H1 (cell line): ENCODE measurements at regions of chr13 and their contacts with region 1.

Region 1: DNA sequence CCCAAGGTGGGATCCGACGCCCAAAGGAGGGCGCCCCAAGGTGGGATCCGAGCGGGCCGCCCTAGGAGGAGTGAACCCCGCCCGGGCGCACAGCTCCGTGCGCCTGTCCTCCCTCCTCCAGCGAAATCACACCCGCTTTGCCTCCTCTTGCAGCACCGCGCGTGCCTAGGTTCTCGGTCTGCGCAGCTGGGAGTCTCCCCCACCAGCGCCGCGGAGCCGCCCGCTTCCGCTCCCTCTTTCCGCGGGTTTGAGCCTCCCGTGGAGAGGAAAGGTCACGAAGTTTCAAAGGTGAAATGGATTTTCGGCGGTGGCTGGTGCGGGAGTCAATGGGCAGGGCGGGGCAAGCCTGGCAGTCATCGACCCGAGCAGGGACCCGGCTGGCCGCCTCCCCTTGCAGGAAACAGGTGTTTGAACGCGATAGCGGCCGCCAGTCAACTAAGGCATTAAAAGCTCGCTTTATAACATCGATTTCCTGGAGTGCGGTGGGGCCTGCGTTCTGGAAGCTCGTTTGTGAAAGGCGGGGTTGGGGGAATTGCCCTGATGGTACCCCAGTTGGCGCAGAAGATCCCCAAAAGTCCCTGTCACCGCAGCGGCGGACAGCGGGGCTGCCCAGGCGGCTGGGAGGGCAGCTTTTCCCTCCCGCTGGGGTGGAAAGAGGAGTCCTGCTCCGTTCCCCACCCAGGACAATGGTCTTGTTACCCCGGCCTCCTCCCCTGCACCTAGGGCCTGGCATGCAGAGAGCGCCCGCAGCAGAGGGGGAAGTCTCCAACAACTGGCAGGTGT is 9.0 kb upstream of the SOX1 start:
- DNase-seq: peak in 1 of 2 experiments; percentile 61
- H3K4me3 ChIP-seq: peak overlapping the region; percentile 13 to 55 (median 19); a peak in 6 of 8 replicates
- H3K27ac ChIP-seq: no peak overlapping the region
- H3K4me1 ChIP-seq: peaks cover 3 to 44% (median 25%) of the 10 kb centered on the region in 4 experiments
- H3K27me3 ChIP-seq: peaks cover 97 to 100% (median 99%) of the 10 kb centered on the region in 4 experiments
- CTCF ChIP-seq: no peak
- EP300 ChIP-seq: no peak
- POLR2A ChIP-seq: no peak
- RAD21 ChIP-seq: no peak

Region 2: DNA sequence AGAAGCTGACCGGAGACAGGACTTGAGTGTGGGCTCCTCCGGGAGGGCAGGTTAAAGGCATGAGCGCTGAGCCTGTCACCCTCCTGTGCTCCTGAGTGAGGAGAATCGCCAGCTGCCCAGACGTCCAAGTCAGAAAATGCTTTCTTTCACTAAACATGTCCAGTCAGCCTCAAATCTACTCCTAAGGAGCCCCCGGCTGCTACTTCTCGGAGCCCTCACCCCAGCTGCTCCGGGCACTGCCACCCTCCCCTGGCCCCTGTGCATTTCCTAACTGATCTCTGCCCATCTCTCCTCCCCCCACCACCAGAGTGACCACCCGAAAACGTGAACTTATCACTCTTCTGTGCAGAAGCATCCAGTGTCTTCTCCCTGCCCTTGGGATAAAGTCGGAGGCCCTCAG is 268.5 kb before region 1 on chr13:
- CTCF ChIA-PET with region 1: no interaction called
- POLR2A ChIA-PET with region 1: no interaction called
- DNase-seq: peak in 1 of 2 experiments; percentile 33
- H3K4me3 ChIP-seq: no peak overlapping the region
- H3K27ac ChIP-seq: no peak overlapping the region
- H3K4me1 ChIP-seq: no peaks in the 10 kb centered on the region
- H3K27me3 ChIP-seq: no peaks in the 10 kb centered on the region
- CTCF ChIP-seq: no peak
- EP300 ChIP-seq: no peak
- POLR2A ChIP-seq: no peak
- RAD21 ChIP-seq: no peak

Region 3: DNA sequence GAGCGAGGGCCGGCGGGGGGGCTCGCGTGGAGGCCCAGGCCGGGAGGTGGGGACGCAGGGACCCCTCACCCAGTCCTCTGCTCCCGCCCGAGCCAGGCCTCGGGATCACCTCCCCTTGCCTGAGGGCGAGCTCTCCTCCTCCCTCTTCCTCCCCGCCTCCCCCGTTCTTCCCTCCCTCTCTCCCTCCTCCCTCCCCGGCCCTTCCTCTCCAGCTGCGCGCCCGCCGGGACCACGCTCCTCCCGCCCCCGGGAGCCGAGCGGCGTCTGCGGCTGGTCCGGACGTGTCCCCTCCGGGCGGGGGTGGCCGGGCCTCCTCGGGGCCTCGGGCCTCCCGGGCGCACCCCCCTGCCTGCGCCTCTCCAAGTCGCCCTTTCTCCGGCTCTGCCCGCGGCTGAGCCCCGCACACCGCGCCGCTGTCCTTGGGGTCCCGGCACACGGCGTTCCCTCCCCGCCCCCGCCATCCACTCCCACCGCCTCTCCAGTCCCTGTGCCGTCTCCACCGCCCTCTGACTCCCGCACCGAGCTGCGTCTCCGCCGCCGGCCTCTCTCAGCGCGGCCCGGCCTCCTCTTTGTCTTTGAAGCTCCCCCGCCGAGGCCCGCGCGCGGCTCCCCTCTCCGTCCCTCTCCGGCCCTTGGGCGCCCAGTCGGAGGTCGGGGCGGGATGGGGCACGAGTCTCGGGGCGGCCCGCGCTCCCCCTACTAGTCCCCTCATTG is 14.8 kb after region 1 on chr13:
- CTCF ChIA-PET with region 1: interaction called, 5 read pairs
- POLR2A ChIA-PET with region 1: interaction called, 25 read pairs
- DNase-seq: peak in 1 of 2 experiments; percentile 88
- H3K4me3 ChIP-seq: peak overlapping the region; percentile 29 to 70 (median 36)
- H3K27ac ChIP-seq: no peak overlapping the region
- H3K4me1 ChIP-seq: peaks cover 3 to 14% (median 8%) of the 10 kb centered on the region in 4 experiments
- H3K27me3 ChIP-seq: peaks cover 53 to 77% (median 70%) of the 10 kb centered on the region in 4 experiments
- CTCF ChIP-seq: no peak
- EP300 ChIP-seq: no peak; a peak in 1 of 3 replicates
- POLR2A ChIP-seq: no peak
- RAD21 ChIP-seq: no peak